ENCODE measurements at regions of chr13 and their contacts with region 1.

Region 1: GRCh38 chr13:46893798-46894560 is 2.9 kb downstream of the HTR2A start:
- DNase-seq: no peak
- H3K4me3 ChIP-seq: peak overlapping the region; percentile 61
- H3K27me3 ChIP-seq: peaks cover 3% of the 10 kb centered on the region
- CTCF ChIP-seq: peak; percentile 97

Region 2: DNA sequence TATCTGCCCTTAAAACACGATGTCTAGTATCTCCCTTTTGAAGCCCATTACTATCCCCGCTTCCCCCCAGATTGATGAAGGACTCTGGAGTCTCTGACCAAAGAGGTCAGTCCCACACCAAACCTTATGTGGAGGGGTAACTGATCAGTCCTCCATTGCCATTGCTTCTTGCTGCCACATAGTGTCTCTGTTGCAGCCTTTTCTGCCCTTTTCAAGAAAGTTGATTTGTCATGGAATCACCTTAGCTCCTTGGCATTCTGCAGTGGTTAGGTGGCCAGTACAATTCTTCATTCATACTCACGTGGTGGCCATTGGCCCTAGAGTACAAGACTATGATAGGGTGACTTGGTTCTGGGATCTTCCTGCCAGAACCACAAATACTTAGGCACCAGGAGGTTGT is 11.3 kb after region 1 on chr13:
- CTCF ChIA-PET with region 1: interaction called, 13 read pairs
- POLR2A ChIA-PET with region 1: no interaction called
- DNase-seq: no peak
- H3K4me3 ChIP-seq: no peak overlapping the region
- H3K27me3 ChIP-seq: no peaks in the 10 kb centered on the region
- CTCF ChIP-seq: 0 out of 2 replicates have a peak, but pooled peaks have one; percentile 14

Region 3: DNA sequence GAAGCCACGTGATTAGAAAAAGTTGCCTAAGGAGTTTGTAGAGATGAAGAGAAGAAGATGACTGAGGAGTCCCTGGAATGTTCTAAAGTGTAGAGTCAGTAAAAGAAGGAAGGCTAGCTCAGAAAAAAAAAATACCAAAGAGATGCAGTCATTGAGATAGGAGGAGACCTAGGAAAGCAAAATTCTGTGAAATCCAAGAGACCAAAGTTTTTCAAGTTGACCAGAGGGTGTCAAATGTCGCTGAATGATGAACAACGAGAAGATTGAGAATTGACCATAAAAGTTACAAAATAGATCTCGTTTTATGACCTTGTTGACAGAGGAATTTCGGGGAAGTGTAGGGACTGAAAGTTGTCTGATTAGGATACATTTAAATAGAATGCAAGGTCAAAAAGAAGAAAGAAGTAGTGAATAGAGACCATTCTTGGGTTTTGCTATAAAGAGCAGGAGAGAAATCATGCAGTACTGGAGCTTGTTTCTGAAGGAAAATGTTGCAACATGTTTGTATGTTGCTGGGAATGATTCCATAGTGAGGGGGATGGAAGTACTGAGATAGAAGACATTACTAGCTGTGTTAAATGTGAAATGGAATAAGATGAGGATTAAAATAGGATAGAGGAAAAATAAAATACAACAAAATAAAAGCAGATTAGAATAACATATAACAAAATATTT is 33.1 kb after region 1 on chr13:
- CTCF ChIA-PET with region 1: interaction called, 10 read pairs
- POLR2A ChIA-PET with region 1: no interaction called
- DNase-seq: peak; percentile 12
- H3K4me3 ChIP-seq: no peak overlapping the region
- H3K27me3 ChIP-seq: no peaks in the 10 kb centered on the region
- CTCF ChIP-seq: no peak

Region 4: GRCh38 chr13:47036291-47037008 is 142.5 kb after region 1 on chr13:
- CTCF ChIA-PET with region 1: no interaction called
- POLR2A ChIA-PET with region 1: no interaction called
- DNase-seq: no peak
- H3K4me3 ChIP-seq: no peak overlapping the region
- H3K27me3 ChIP-seq: no peaks in the 10 kb centered on the region
- CTCF ChIP-seq: no peak

Region 5: DNA sequence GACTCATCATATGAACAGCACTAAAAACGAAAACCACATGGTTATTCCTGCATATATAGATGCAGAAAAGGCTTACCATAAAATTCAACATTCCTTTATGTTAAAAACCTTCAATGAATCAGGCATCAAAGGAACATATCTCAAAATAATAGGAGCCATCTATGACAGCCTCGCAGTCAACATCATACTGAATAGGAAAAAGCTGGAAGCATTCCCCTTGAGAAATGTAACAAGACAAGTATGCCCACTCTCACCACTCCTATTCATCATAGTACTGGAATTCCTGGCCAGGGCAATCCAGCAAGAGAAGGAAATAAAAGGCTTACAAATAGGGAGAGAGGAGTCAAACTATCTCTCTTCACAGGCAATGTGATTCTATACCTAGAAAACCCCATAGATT is 182.5 kb after region 1 on chr13:
- CTCF ChIA-PET with region 1: no interaction called
- POLR2A ChIA-PET with region 1: no interaction called
- DNase-seq: no peak
- H3K4me3 ChIP-seq: no peak overlapping the region
- H3K27me3 ChIP-seq: no peaks in the 10 kb centered on the region
- CTCF ChIP-seq: no peak

Region 6: GRCh38 chr13:47459512-47459911 is 565.5 kb after region 1 on chr13:
- CTCF ChIA-PET with region 1: interaction called, 11 read pairs
- POLR2A ChIA-PET with region 1: no interaction called
- DNase-seq: no peak
- H3K4me3 ChIP-seq: no peak overlapping the region
- H3K27me3 ChIP-seq: no peaks in the 10 kb centered on the region
- CTCF ChIP-seq: peak; percentile 48

Measured in BJ (cell line).